MCF 10A (cell line): ENCODE measurements at regions of chr22 and their contacts with region 1.

Region 1: GRCh38 chr22:40525249-40525884 is 111.2 kb downstream of the MRTFA start:
- DNase-seq: peak; percentile 65
- H3K4me3 Mint-ChIP-seq: no peak overlapping the region
- H3K27ac Mint-ChIP-seq: no peak overlapping the region
- H3K4me1 Mint-ChIP-seq: peaks cover 12% of the 10 kb centered on the region
- H3K27me3 Mint-ChIP-seq: no peaks in the 10 kb centered on the region
- CTCF ChIP-seq: peak; percentile 54

Region 2: DNA sequence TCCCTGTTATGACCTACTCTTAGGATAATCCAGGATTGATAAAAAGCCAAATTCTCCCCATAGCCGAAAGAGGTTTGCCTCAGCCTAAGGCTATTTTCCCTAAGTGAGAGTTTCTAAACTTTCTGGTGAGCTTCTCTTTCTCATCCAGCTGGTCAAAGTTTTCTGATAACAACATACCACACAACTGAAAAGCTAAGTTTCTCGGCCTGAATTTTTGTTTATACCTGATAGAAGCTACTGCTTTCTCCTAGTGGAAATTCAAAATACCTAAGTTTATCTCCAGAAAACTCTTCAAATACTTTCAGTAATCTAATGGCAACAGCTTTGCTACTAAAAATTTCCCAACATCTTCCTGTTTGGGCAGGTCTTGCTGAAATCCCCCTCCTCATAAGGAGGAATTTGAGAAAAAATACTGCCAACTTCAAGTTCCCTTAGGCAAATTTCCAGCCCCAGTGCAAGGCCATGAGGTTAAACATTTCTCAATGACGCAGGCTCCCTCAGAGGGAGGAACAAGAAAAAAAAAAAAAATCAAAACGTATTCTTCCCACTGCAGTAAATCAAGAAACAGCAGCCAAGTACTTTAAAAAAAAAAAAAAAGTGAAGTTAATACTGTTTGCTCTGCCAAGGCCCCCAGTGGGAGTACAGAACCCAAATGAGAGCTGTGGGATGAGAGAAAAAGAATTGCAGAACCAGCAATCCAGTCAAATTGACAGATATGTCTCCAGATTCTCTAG is 15.8 kb before region 1 on chr22:
- CTCF ChIA-PET with region 1: interaction called, 23 read pairs
- POLR2A ChIA-PET with region 1: interaction called, 16 read pairs
- intact Hi-C with region 1: no loop called
- DNase-seq: peak; percentile 97
- H3K4me3 Mint-ChIP-seq: peak overlapping the region; percentile 31
- H3K27ac Mint-ChIP-seq: peak overlapping the region; percentile 85
- H3K4me1 Mint-ChIP-seq: peaks cover 44% of the 10 kb centered on the region
- H3K27me3 Mint-ChIP-seq: no peaks in the 10 kb centered on the region
- CTCF ChIP-seq: no peak

Region 3: DNA sequence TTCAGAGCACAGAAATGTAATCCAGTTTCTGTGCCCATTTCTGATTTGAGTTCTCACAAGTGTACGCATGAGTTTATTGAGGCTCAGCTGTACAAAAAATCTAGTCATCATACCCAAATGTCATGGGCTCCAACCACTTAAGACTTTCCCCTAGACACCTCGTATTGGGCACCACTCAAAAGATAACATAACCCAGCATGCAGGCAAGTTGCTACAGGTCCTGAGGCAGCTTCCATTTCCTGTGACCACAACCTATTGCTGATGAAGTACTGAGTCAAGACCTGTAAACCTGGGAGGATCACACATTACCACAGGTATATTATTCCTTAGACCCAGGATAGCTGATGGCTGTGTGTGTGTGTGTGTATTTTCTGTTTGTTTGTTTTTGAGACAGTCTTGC is 15.9 kb after region 1 on chr22:
- CTCF ChIA-PET with region 1: interaction called, 4 read pairs
- POLR2A ChIA-PET with region 1: interaction called, 19 read pairs
- intact Hi-C with region 1: no loop called
- DNase-seq: peak; percentile 91
- H3K4me3 Mint-ChIP-seq: peak overlapping the region; percentile 36
- H3K27ac Mint-ChIP-seq: peak overlapping the region; percentile 89
- H3K4me1 Mint-ChIP-seq: peaks cover 31% of the 10 kb centered on the region
- H3K27me3 Mint-ChIP-seq: no peaks in the 10 kb centered on the region
- CTCF ChIP-seq: no peak

Region 4: GRCh38 chr22:40645579-40646197 is 120.3 kb after region 1 on chr22:
- CTCF ChIA-PET with region 1: interaction called, 40 read pairs
- POLR2A ChIA-PET with region 1: interaction called, 33 read pairs
- intact Hi-C with region 1: loop called (anchors 1 kb)
- DNase-seq: no peak
- H3K4me3 Mint-ChIP-seq: no peak overlapping the region
- H3K27ac Mint-ChIP-seq: peak overlapping the region; percentile 54
- H3K4me1 Mint-ChIP-seq: peaks cover 13% of the 10 kb centered on the region
- H3K27me3 Mint-ChIP-seq: no peaks in the 10 kb centered on the region
- CTCF ChIP-seq: no peak

Region 5: DNA sequence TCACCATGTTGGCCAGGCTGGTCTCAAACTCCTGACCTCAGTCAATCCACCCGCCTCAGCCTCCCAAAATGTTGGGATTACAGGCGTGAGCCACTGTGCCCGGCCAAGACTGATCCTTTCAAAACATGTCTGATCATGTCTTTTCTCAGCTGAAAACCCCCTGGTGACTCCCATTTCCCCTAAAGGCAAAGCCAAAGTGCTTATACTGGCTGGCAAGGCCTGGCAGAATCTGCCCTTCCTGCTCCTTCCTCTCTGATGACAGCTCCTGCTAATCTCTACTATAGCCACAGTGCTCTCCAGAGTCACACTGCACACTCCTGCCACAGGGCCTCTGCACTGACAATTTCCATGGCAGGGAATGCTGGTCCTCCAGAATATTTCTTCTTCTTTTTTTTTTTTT is 151.3 kb after region 1 on chr22:
- CTCF ChIA-PET with region 1: no interaction called
- POLR2A ChIA-PET with region 1: no interaction called
- intact Hi-C with region 1: no loop called
- DNase-seq: peak; percentile 55
- H3K4me3 Mint-ChIP-seq: no peak overlapping the region
- H3K27ac Mint-ChIP-seq: peak overlapping the region; percentile 69
- H3K4me1 Mint-ChIP-seq: peaks cover 5% of the 10 kb centered on the region
- H3K27me3 Mint-ChIP-seq: no peaks in the 10 kb centered on the region
- CTCF ChIP-seq: no peak

Region 6: DNA sequence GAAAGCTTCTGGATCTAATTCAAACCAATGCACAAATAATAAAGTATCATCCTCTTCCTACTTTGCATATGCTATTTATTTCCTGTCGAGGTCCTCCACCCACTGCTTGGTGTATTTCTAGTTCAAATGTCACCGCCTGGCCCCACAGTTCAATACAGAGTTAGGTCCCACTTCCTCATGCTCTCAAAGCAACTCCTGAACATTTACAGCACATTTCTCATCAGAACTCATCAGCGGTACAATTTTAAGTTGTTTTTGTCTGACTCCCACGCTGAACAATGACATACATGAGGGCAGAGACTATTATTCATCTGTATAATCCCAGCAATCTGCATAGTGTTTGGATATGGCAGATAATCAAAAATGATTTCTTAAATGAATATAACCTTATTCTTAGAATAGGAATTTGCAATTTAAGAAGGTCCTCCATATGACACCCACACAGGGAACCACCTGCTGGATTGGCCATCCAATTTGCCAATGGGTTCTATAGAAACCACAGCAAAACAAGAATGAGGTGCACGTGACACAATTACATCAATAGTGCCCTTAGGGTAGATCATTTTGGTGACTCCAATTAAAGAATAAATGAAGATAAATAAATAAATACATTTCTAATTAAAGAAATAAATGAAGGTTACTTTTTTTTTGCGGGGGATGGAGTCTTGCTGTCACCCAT is 239.5 kb after region 1 on chr22:
- CTCF ChIA-PET with region 1: interaction called, 3 read pairs
- POLR2A ChIA-PET with region 1: no interaction called
- intact Hi-C with region 1: loop called (anchors 2 kb)
- DNase-seq: no peak
- H3K4me3 Mint-ChIP-seq: no peak overlapping the region
- H3K27ac Mint-ChIP-seq: no peak overlapping the region
- H3K4me1 Mint-ChIP-seq: no peaks in the 10 kb centered on the region
- H3K27me3 Mint-ChIP-seq: no peaks in the 10 kb centered on the region
- CTCF ChIP-seq: no peak